ENCODE measurements at regions of chr1 and their contacts with region 1.

Region 1: DNA sequence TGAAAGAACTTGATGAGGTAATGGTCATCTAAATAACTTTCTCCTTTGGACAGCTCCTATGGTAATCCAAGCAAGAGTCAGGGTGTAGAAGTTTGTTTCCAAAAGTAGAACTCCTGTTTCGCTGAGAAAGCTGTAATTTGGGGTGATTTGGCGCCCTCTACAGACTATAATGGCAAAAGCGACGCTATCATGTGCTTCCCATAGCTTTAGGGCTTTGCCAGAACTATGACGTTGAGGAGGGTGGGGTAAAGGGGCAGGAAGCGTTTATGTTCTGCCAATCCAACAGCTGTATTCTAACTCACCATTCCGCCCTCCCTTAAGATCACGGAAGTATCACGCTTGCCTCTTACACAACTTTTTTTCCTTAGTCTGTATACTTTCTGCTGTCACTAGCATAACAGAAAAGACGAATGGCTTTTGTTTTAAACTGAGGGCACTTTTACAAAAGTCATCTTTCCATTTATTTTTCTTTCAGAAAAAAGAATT is at the start of gene FMO4:
- DNase-seq: peak; percentile 95 to 97
- H3K4me3 ChIP-seq: no peak within 1 kb of the TSS
- CTCF ChIP-seq: peak in 1 of 3 donors; percentile 49
- POLR2A ChIP-seq: no peak
- total RNA-seq, gene FMO4: 2.3 to 4.7 (median 3.2) TPM

Region 2: DNA sequence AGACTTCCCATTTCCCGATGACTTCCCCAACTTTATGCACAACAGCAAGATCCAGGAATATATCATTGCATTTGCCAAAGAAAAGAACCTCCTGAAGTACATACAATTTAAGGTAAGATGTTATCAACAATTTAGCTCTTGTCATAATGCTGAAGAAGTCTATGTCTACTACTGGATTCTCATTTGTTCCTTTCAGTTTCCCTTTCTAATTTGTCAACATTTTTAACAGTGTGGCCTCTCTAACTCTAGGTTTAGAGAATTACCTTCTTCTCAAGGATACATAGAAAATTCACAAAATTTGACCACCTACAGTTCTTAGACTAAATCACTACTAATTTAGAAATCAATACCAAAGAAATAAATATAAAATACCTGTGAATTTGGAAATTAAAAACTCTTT is 210.0 kb before region 1 on chr1:
- intact Hi-C with region 1: no loop called
- DNase-seq: no peak
- H3K4me3 ChIP-seq: no peak overlapping the region
- CTCF ChIP-seq: no peak
- POLR2A ChIP-seq: no peak

Region 3: DNA sequence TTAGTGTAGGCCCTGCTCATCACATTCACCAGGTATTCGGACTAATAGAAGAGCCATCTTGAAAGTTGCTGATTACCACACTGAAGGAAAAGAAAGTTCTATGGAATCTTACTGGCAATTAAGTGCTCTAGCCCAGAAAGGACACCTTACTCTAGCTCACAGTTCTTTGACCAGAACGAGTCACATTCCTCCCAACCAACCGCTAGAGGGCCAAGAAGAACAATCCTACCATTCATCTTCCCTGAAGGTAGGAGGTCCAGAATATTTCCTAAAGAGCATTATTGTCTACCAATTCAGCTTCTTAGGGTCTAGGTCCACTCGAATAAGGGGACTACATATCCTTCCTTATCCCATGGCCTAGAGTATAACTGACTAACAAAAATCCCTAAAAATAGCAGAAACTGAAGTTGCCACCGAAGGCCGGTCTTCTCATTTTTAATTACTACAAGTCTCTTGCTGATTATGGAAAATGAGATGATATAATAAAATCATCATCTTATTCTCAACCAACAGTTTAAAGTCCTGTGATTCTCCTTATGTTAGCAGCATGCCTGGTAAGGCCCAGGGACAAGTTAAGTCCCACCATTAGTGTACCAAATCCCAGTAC is 68.3 kb before region 1 on chr1:
- intact Hi-C with region 1: loop called (anchors 10 kb)
- DNase-seq: no peak
- H3K4me3 ChIP-seq: no peak overlapping the region
- CTCF ChIP-seq: peak in 1 of 3 donors; percentile 37
- POLR2A ChIP-seq: no peak

Region 4: DNA sequence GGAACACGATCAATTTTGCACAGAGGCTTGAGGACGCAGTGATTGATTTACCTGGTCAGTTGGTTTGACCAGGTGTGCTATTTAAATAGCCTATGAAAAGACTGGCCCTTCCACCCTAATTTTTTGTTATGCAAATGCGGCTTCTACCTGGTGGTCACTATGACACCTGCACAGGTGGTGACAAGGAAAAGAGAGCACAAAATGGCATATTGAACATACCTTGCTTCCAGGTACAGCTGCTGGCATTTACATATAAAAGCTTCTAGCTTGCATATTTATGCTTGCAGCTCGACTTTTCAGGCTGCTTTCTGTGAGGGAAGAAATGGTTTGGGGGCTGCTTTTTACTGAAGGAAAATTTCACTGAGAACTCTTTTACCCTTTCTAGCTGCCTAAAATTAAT is 15.2 kb before region 1 on chr1:
- intact Hi-C with region 1: no loop called
- DNase-seq: no peak
- H3K4me3 ChIP-seq: no peak overlapping the region
- CTCF ChIP-seq: no peak
- POLR2A ChIP-seq: no peak